CD14-positive monocyte (primary cell): ENCODE measurements at regions of chr2 and their contacts with region 1.

Region 1: DNA sequence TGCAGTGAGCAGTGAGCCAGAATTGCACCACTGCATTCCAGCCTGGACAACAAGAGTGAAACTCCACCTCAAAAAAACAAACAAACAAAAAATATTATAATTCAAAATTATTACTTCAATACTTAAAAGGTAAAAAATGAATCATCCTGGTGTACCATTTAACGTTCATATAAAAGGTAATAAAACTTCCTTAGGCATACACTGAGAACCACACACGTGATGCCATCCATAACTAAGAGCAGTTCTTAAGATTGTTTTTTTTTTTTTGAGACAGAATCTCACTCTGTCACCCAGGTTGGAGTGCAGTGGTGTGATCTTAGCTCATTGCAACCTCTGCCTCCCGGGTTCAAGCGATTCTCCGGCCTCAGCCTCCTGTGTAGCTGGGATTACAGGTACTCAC is 29.4 kb downstream of the YWHAQ start:
- DNase-seq: no peak
- H3K4me3 ChIP-seq: no peak overlapping the region
- H3K4me3 Mint-ChIP-seq: no peak overlapping the region
- H3K27ac ChIP-seq: no peak overlapping the region
- H3K27ac Mint-ChIP-seq: peak overlapping the region in 2 of 7 donors; percentile 30 to 77
- H3K4me1 ChIP-seq: peaks cover 4 to 6% of the 10 kb centered on the region in 2 donors
- H3K4me1 Mint-ChIP-seq: peaks cover 5% of the 10 kb centered on the region
- H3K27me3 ChIP-seq: no peaks in the 10 kb centered on the region
- H3K27me3 Mint-ChIP-seq: no peaks in the 10 kb centered on the region
- CTCF ChIP-seq: no peak

Region 2: GRCh38 chr2:9555297-9556141 is 45.9 kb before region 1 on chr2 and contains the start of gene ADAM17:
- intact Hi-C with region 1: loop called in 1 of 2 experiments (anchors 10 kb)
- DNase-seq: peak; percentile 96 to 97 (median 97)
- H3K4me3 ChIP-seq: peak within 1 kb of the TSS; percentile 68 to 100 (median 99)
- H3K4me3 Mint-ChIP-seq: peak within 1 kb of the TSS; percentile 96 to 98
- H3K27ac ChIP-seq: peak within 1 kb of the TSS; percentile 98 to 99
- H3K27ac Mint-ChIP-seq: peak within 1 kb of the TSS; percentile 98 to 100 (median 99)
- H3K4me1 ChIP-seq: peaks cover 45 to 54% of the 10 kb centered on the region in 2 donors
- H3K4me1 Mint-ChIP-seq: peaks cover 46% of the 10 kb centered on the region
- H3K27me3 ChIP-seq: no peaks in the 10 kb centered on the region
- H3K27me3 Mint-ChIP-seq: peaks cover 0 to 6% (median 4%) of the 10 kb centered on the region in 3 donors
- CTCF ChIP-seq: no peak
- polyA plus RNA-seq, gene ADAM17: 30.2 to 34.8 (median 30.9) TPM

Region 3: GRCh38 chr2:9565436-9566153 is 35.8 kb before region 1 on chr2:
- intact Hi-C with region 1: loop called in 1 of 2 experiments (anchors 5 kb)
- DNase-seq: peak in 1 of 3 donors; percentile 33
- H3K4me3 ChIP-seq: no peak overlapping the region
- H3K4me3 Mint-ChIP-seq: no peak overlapping the region
- H3K27ac ChIP-seq: no peak overlapping the region
- H3K27ac Mint-ChIP-seq: no peak overlapping the region
- H3K4me1 ChIP-seq: no peaks in the 10 kb centered on the region
- H3K4me1 Mint-ChIP-seq: no peaks in the 10 kb centered on the region
- H3K27me3 ChIP-seq: no peaks in the 10 kb centered on the region
- H3K27me3 Mint-ChIP-seq: peaks cover 0 to 2% (median 0%) of the 10 kb centered on the region in 3 donors
- CTCF ChIP-seq: no peak